Gastrocnemius medialis (tissue), 4 donors: ENCODE measurements at regions of chr10 and their contacts with region 1.

Region 1: GRCh38 chr10:51960494-51960895 is 261.1 kb upstream of the CSTF2T start:
- DNase-seq: no peak
- ATAC-seq: peak; percentile 78 to 89
- H3K4me3 ChIP-seq: no peak overlapping the region
- H3K27ac ChIP-seq: no peak overlapping the region
- H3K4me1 ChIP-seq: peaks cover 4 to 12% of the 10 kb centered on the region in 2 donors
- H3K27me3 ChIP-seq: no peaks in the 10 kb centered on the region
- CTCF ChIP-seq: peak; percentile 35 to 61 (median 46)
- POLR2A ChIP-seq: no peak

Region 2: DNA sequence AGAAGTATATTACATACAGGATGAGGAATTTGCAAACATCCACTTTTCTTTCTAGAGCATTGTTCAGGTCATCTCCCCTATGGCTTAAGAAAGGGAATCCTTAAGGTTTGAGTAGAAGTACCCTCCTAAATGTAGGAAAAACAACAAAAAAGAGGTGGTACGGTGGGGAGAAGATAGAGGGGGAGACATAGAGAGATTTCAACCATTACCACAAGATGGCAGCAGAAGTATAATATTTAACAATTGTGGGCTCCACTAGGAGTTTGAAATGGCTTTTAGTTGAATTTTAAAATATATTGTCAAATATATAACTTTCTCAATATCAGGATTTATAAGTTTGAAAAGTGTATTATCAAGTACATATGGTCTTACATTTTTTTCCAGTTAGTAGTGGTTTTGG is 958.9 kb before region 1 on chr10:
- in situ Hi-C with region 1: loop called in 1 of 4 experiments (anchors 25 kb)
- intact Hi-C with region 1: loop called (anchors 2 kb)
- DNase-seq: no peak
- ATAC-seq: peak; percentile 50 to 72
- H3K4me3 ChIP-seq: no peak overlapping the region
- H3K27ac ChIP-seq: peak overlapping the region in 2 of 4 donors; percentile 1 to 25
- H3K4me1 ChIP-seq: peaks cover 43 to 65% of the 10 kb centered on the region in 2 donors
- H3K27me3 ChIP-seq: no peaks in the 10 kb centered on the region
- CTCF ChIP-seq: peak; percentile 45 to 66 (median 53)
- POLR2A ChIP-seq: no peak

Region 3: GRCh38 chr10:51010977-51011376 is 949.5 kb before region 1 on chr10:
- in situ Hi-C with region 1: loop called in 1 of 4 experiments (anchors 25 kb)
- intact Hi-C with region 1: no loop called
- DNase-seq: no peak
- ATAC-seq: peak in 1 of 2 donors; percentile 46
- H3K4me3 ChIP-seq: no peak overlapping the region
- H3K27ac ChIP-seq: no peak overlapping the region
- H3K4me1 ChIP-seq: peaks cover 9 to 14% of the 10 kb centered on the region in 2 donors
- H3K27me3 ChIP-seq: no peaks in the 10 kb centered on the region
- CTCF ChIP-seq: peak; percentile 53 to 78 (median 64)
- POLR2A ChIP-seq: no peak

Region 4: GRCh38 chr10:51074238-51075028 is 886.1 kb before region 1 on chr10 and contains the start of gene PRKG1:
- in situ Hi-C with region 1: loop called in 3 of 4 experiments (anchors 10 to 25 kb)
- intact Hi-C with region 1: no loop called
- DNase-seq: peak; percentile 46 to 57
- ATAC-seq: peak; percentile 83 to 87
- H3K4me3 ChIP-seq: peak within 1 kb of the TSS; percentile 67 to 89 (median 79)
- H3K27ac ChIP-seq: peak within 1 kb of the TSS; percentile 45 to 81 (median 70)
- H3K4me1 ChIP-seq: peaks cover 12 to 14% of the 10 kb centered on the region in 2 donors
- H3K27me3 ChIP-seq: no peaks in the 10 kb centered on the region
- CTCF ChIP-seq: no peak
- POLR2A ChIP-seq: no peak
- total RNA-seq, gene PRKG1: 10.4 to 39.4 (median 25.1) TPM

Region 5: GRCh38 chr10:51377932-51378599 is 582.4 kb before region 1 on chr10:
- in situ Hi-C with region 1: no loop called
- intact Hi-C with region 1: no loop called
- DNase-seq: no peak
- ATAC-seq: no peak
- H3K4me3 ChIP-seq: no peak overlapping the region
- H3K27ac ChIP-seq: no peak overlapping the region
- H3K4me1 ChIP-seq: peaks cover 15 to 34% of the 10 kb centered on the region in 2 donors
- H3K27me3 ChIP-seq: no peaks in the 10 kb centered on the region
- CTCF ChIP-seq: no peak
- POLR2A ChIP-seq: no peak

Region 6: GRCh38 chr10:51389415-51390321 is 570.8 kb before region 1 on chr10:
- in situ Hi-C with region 1: no loop called
- intact Hi-C with region 1: loop called (anchors 2 kb)
- DNase-seq: no peak
- ATAC-seq: peak in 1 of 2 donors; percentile 30
- H3K4me3 ChIP-seq: no peak overlapping the region
- H3K27ac ChIP-seq: no peak overlapping the region
- H3K4me1 ChIP-seq: peaks cover 3 to 4% of the 10 kb centered on the region in 2 donors
- H3K27me3 ChIP-seq: no peaks in the 10 kb centered on the region
- CTCF ChIP-seq: peak; percentile 44 to 68 (median 59)
- POLR2A ChIP-seq: no peak

Region 7: DNA sequence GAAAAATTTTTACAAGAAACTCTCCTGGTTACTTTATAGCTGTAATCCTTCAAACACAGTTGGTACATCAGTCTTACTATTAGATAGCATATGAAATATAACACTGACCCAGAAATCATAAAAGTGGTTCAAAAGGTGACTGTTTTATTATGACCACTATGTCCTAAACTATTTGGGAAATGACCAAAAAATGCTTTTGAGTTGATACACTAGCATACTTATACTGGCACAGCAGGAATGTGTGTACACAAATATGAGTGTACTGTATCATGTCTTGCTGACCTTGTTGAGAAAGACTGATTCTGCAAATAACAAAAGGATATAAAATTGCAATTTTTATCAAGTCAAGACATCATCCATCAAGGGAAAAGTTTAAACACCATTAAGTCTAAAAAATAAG is 285.4 kb before region 1 on chr10:
- in situ Hi-C with region 1: no loop called
- intact Hi-C with region 1: no loop called
- DNase-seq: no peak
- ATAC-seq: no peak
- H3K4me3 ChIP-seq: no peak overlapping the region
- H3K27ac ChIP-seq: no peak overlapping the region
- H3K4me1 ChIP-seq: peaks cover 0 to 6% of the 10 kb centered on the region in 2 donors
- H3K27me3 ChIP-seq: no peaks in the 10 kb centered on the region
- CTCF ChIP-seq: no peak
- POLR2A ChIP-seq: no peak

Region 8: DNA sequence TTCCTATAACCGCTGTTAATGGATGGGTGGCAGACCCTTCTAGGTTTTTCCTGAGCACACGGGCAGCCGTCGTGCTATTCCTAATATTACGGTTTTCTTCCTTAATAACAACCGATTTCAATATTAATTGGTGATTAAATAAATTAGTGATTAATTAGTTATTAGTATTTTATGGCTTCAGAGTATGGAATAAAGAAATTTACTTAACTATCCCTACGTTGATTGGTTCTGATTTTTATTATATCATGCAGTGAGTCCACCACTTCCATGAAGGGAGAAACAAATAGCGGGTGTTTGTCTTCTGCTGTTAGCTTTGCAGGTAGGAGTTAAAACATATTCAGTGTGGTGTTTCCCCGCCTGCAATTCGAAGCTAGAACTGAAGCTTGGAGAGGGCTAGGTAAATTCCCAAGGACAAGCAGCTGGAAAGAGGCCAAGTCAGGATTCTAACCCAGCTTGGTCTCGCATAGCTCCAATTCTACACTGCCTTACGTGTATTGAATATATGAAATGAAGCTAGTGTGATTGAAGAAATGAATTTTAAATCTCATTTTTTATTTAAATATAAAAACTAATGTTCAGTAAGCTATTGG is 260.2 kb before region 1 on chr10:
- in situ Hi-C with region 1: no loop called
- intact Hi-C with region 1: no loop called
- DNase-seq: peak; percentile 11 to 37
- ATAC-seq: peak; percentile 18 to 24
- H3K4me3 ChIP-seq: peak overlapping the region; percentile 64 to 94 (median 77)
- H3K27ac ChIP-seq: peak overlapping the region; percentile 92 to 94 (median 93)
- H3K4me1 ChIP-seq: peaks cover 36 to 40% of the 10 kb centered on the region in 2 donors
- H3K27me3 ChIP-seq: no peaks in the 10 kb centered on the region
- CTCF ChIP-seq: no peak
- POLR2A ChIP-seq: no peak